Heart right ventricle (tissue), 16 donors: ENCODE measurements at regions of chr2 and their contacts with region 1.

Region 1: DNA sequence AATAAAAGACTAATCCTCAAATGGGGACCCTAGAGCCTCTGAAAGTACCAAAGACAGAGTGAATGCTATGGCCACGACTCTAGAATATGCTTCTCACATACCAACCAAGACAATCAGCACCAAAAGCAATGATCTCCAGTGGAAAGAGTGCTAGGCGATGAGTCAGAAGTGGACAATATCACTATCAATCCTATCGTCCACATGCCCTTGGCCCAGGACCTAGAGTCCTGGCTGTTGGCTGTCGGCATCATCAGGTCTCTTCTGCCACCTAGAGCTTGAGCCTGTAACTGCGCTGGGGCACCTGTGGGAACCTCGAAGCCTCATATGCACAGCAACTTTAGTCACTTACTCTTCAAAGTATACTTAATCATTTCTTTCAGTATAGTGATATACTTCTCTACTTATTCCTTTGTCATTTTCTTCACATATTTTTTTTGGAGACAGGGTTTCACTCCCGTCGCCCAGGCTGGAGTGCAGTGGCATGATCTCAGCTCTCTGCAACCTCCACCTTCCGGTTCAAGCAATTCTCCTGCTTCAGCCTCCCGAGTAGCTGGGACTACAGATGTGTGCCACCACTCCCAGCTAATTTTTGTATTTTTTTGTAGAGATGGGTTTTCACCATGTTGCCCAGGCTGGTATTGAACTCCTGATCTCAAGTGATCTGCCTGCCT is 29.7 kb downstream of the NOL10 start:
- DNase-seq: peak; percentile 37 to 51
- ATAC-seq: peak; percentile 46 to 92 (median 82)
- H3K4me3 ChIP-seq: no peak overlapping the region
- H3K27ac ChIP-seq: no peak overlapping the region
- H3K4me1 ChIP-seq: peaks cover 0 to 11% (median 0%) of the 10 kb centered on the region in 9 donors
- H3K27me3 ChIP-seq: no peaks in the 10 kb centered on the region
- CTCF ChIP-seq: peak; percentile 36 to 87 (median 76)

Region 2: GRCh38 chr2:10072656-10073480 is 587.2 kb before region 1 on chr2:
- intact Hi-C with region 1: loop called in 4 of 10 experiments (anchors 10 kb)
- DNase-seq: peak; percentile 63 to 85
- ATAC-seq: peak; percentile 87 to 94 (median 92)
- H3K4me3 ChIP-seq: no peak overlapping the region
- H3K27ac ChIP-seq: no peak overlapping the region
- H3K4me1 ChIP-seq: peaks cover 0 to 9% (median 0%) of the 10 kb centered on the region in 9 donors
- H3K27me3 ChIP-seq: peaks cover 0 to 49% (median 0%) of the 10 kb centered on the region in 7 donors
- CTCF ChIP-seq: peak; percentile 80 to 91 (median 86)

Region 3: GRCh38 chr2:10122386-10123280 is 537.4 kb before region 1 on chr2 and contains the start of gene RRM2:
- intact Hi-C with region 1: loop called in 8 of 10 experiments (anchors 5 to 10 kb)
- DNase-seq: peak; percentile 92 to 93
- ATAC-seq: peak; percentile 89 to 94 (median 92)
- H3K4me3 ChIP-seq: peak within 1 kb of the TSS; percentile 39 to 77 (median 54)
- H3K27ac ChIP-seq: peak within 1 kb of the TSS in 1 of 10 donors; percentile 77
- H3K4me1 ChIP-seq: peaks cover 14 to 73% (median 29%) of the 10 kb centered on the region in 9 donors
- H3K27me3 ChIP-seq: peaks cover 11 to 27% (median 18%) of the 10 kb centered on the region in 7 donors
- CTCF ChIP-seq: no peak
- total RNA-seq, gene RRM2: 0.08 to 18.7 (median 1.3) TPM

Region 4: GRCh38 chr2:10135296-10136089 is 524.5 kb before region 1 on chr2:
- intact Hi-C with region 1: loop called in 1 of 10 experiments (anchors 10 kb)
- DNase-seq: no peak
- ATAC-seq: peak in 1 of 8 donors; percentile 71
- H3K4me3 ChIP-seq: no peak overlapping the region
- H3K27ac ChIP-seq: no peak overlapping the region
- H3K4me1 ChIP-seq: no peaks in the 10 kb centered on the region
- H3K27me3 ChIP-seq: no peaks in the 10 kb centered on the region
- CTCF ChIP-seq: no peak

Region 5: DNA sequence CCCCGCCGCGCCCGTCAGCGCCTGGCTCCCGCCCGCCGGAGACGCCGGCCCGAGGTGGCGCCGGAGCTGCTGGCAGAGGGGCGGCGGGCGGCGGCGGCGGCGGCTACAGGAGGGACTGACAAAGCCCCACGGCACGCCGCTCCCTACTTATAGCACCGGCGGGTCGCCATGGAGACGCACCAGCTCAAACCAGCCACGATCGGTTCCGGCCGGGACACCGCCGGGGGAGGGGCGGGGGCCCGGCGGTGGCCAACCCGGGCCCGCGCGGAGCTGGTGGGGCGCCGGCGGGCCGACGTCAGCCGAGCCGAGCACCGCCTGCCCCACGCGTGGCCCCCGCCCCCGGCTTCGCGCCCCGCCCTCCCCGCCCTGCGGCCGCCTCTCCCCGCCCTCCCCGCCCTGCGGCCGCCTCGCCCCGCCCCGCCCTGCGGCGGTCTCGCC is 211.8 kb before region 1 on chr2 and contains the start of gene ODC1:
- intact Hi-C with region 1: loop called in 8 of 10 experiments (anchors 5 to 10 kb)
- DNase-seq: peak; percentile 92 to 94
- ATAC-seq: peak; percentile 83 to 93 (median 91)
- H3K4me3 ChIP-seq: peak within 1 kb of the TSS; percentile 56 to 83 (median 68)
- H3K27ac ChIP-seq: peak within 1 kb of the TSS; percentile 81 to 96 (median 90)
- H3K4me1 ChIP-seq: peaks cover 8 to 54% (median 29%) of the 10 kb centered on the region in 9 donors
- H3K27me3 ChIP-seq: no peaks in the 10 kb centered on the region
- CTCF ChIP-seq: no peak
- total RNA-seq, gene ODC1: 25.4 to 92.8 (median 56.0) TPM

Region 6: GRCh38 chr2:10457911-10458604 is 202.0 kb before region 1 on chr2:
- intact Hi-C with region 1: loop called in 1 of 10 experiments (anchors 5 kb)
- DNase-seq: no peak
- ATAC-seq: no peak
- H3K4me3 ChIP-seq: no peak overlapping the region
- H3K27ac ChIP-seq: peak overlapping the region in 1 of 10 donors; percentile 15
- H3K4me1 ChIP-seq: peaks cover 0 to 24% (median 9%) of the 10 kb centered on the region in 9 donors
- H3K27me3 ChIP-seq: no peaks in the 10 kb centered on the region
- CTCF ChIP-seq: no peak

Region 7: DNA sequence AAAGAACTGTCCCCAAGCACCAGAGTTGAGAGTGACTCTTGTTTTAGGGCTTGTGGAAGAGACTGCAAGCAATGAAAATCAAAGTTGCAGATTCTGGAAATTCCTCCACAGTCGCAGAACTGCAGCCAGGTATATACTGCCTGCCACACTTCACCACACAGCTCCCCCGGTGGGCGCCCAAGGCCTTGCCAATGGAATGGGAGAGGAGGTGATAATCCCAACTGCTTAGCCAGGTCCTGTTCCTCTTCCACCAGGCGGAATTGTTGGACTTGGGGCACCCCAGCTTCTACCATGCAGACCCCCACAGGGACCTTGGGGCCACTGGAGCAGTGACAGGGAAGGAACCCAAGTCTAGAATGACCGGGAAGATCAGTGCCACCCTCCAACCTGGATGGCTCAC is 157.4 kb after region 1 on chr2:
- intact Hi-C with region 1: no loop called
- DNase-seq: no peak
- ATAC-seq: no peak
- H3K4me3 ChIP-seq: no peak overlapping the region
- H3K27ac ChIP-seq: no peak overlapping the region
- H3K4me1 ChIP-seq: peaks cover 0 to 36% (median 21%) of the 10 kb centered on the region in 9 donors
- H3K27me3 ChIP-seq: no peaks in the 10 kb centered on the region
- CTCF ChIP-seq: peak in 2 of 9 donors; percentile 11 to 15